Ascending aorta (tissue), 2 donors: ENCODE measurements at regions of chr3 and their contacts with region 1.

Region 1: GRCh38 chr3:189961525-189962161 is 159.1 kb downstream of the P3H2 start:
- DNase-seq: peak in 1 of 2 donors; percentile 87
- H3K4me3 ChIP-seq: no peak overlapping the region
- H3K27ac ChIP-seq: no peak overlapping the region
- H3K4me1 ChIP-seq: no peaks in the 10 kb centered on the region
- H3K27me3 ChIP-seq: no peaks in the 10 kb centered on the region
- CTCF ChIP-seq: peak; percentile 81 to 92 (median 89)

Region 2: GRCh38 chr3:190205739-190206138 is 244.1 kb after region 1 on chr3:
- intact Hi-C with region 1: loop called (anchors 1 kb)
- DNase-seq: no peak
- H3K4me3 ChIP-seq: no peak overlapping the region
- H3K27ac ChIP-seq: no peak overlapping the region
- H3K4me1 ChIP-seq: no peaks in the 10 kb centered on the region
- H3K27me3 ChIP-seq: no peaks in the 10 kb centered on the region
- CTCF ChIP-seq: no peak

Region 3: GRCh38 chr3:190265796-190266195 is 304.2 kb after region 1 on chr3:
- intact Hi-C with region 1: no loop called
- DNase-seq: no peak
- H3K4me3 ChIP-seq: no peak overlapping the region
- H3K27ac ChIP-seq: no peak overlapping the region
- H3K4me1 ChIP-seq: no peaks in the 10 kb centered on the region
- H3K27me3 ChIP-seq: no peaks in the 10 kb centered on the region
- CTCF ChIP-seq: no peak

Region 4: DNA sequence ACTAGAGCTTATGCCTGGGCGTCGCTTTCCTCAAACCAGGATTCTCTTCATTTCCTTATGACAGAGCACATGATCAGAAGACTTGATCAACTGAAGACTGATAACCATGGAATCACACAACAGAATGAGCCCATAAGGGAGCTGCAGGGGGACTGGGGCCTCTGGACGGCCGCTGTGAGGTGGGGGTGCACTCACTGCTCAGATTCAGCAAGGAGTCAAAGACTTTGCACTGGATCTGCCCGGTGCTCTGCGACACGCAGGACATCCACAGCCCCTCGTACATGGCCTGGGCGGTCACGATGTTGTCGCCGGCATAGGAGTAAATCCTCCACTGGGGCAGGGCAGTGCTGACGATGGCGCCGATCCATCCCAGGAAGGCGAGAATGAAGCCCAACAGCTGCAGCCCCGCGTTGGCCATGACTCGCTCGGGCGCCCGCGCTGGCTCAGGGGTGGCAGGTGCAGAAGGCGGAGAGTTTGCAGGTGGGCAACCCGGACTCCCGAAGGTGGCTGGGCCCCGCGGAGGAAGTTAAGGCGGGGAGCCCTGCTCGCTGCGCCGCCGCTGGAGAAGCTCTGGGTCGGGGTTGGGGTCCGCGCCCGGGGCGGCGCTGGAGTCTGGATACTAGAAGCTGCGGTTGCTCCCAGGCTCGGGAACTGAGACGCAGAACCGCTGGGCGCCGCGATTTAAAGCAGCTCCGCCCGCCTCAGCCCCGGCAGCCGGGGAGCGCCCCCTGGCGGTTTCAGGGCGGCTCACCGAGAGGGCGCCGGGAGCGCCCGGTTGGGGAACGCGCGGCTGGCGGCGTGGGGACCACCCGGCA is 360.4 kb after region 1 on chr3 and contains the start of gene CLDN1:
- intact Hi-C with region 1: loop called (anchors 2 kb)
- DNase-seq: peak in 1 of 2 donors; percentile 85
- H3K4me3 ChIP-seq: peak within 1 kb of the TSS; percentile 58 to 69
- H3K27ac ChIP-seq: no peak within 1 kb of the TSS
- H3K4me1 ChIP-seq: no peaks in the 10 kb centered on the region
- H3K27me3 ChIP-seq: no peaks in the 10 kb centered on the region
- CTCF ChIP-seq: peak; percentile 79 to 98 (median 95)
- total RNA-seq, gene CLDN1: 0.53 TPM

Region 5: DNA sequence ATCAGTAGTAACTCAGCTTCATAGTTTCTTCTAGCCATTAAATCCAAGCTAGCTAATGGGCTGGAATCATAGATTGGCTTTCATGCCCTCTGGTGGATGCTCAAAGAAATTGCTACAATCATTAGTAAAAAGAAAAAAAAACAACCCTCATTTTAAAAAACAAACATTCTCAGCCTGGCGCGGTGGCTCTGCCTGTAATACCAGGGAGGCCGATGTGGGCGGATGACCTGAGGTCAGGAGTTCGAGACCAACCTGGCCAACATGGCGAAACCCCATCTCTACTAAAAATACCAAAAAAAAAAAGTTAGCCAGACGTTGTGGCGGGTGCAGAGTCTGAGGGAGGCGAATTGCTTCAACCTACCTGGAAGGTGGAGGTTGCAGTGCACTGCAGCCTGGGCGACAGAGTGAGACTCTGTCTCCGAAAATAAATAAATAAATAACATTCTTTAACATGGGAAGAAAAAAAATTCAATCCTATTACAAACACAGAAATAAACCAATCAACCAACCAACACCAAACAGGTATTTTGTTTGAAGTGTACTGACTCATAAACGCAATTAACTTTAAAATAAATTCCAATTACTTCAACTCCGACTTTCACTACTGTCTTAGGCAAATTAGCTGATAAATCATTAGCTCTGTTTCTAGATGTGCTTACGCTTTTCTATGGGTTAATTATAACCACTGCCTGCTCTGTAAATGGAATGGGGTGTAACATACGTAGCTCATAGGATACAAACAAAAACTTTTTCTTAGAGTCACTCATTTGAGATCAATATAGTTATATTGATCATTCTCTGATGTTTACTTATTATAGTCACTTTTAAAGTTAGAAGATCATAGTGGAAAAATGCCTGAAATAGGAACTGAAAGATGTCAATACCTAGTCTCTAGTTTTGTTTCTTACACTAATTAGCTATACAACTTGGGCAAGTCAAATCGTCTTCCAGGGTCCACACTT is 463.1 kb after region 1 on chr3:
- intact Hi-C with region 1: loop called (anchors 2 kb)
- DNase-seq: no peak
- H3K4me3 ChIP-seq: no peak overlapping the region
- H3K27ac ChIP-seq: no peak overlapping the region
- H3K4me1 ChIP-seq: no peaks in the 10 kb centered on the region
- H3K27me3 ChIP-seq: no peaks in the 10 kb centered on the region
- CTCF ChIP-seq: peak; percentile 26 to 60 (median 53)

Region 6: DNA sequence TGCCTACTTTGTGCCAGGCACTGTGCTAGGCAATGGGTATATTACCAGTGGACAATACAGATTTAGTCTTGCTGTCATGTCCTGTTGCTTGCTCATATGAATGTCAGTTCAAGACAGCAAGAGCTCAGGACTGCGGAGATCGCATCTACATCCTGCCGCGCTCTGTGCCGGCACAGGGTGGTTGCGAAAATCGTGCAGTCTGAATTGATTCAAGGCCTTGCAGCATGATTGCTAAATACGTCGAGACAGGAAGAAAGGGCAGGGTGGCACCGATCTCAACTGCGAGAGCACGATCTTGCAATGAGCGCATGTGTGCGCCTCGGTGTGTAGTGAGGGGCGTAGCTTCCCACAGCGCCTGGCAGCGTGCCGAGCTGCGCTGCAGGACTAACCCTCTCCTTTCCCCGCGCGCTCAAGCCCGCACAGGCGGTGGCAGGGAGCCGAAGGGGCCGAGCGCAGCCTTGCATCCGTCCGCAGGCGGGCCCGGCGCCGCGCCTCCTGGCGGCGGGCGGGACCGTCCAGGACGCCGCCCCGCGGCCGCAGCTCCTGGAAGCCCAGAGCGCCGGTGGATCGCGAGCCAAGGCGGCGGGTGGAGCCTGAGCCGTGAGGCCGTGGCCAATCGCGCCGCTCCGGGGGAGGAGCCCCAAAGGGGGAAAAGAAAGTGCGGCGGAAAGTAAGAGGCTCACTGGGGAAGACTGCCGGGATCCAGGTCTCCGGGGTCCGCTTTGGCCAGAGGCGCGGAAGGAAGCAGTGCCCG is 551.9 kb after region 1 on chr3 and contains the start of gene IL1RAP:
- intact Hi-C with region 1: loop called (anchors 10 kb)
- DNase-seq: peak; percentile 40 to 94
- H3K4me3 ChIP-seq: peak within 1 kb of the TSS; percentile 86 to 89
- H3K27ac ChIP-seq: peak within 1 kb of the TSS; percentile 75 to 79
- H3K4me1 ChIP-seq: peaks cover 0 to 4% of the 10 kb centered on the region in 2 donors
- H3K27me3 ChIP-seq: no peaks in the 10 kb centered on the region
- CTCF ChIP-seq: peak in 2 of 3 experiments; percentile 54 to 88
- total RNA-seq, gene IL1RAP: 12.8 TPM